ENCODE measurements at regions of chr13 and their contacts with region 1.

Region 1: GRCh38 chr13:112873851-112874750 is 94.9 kb upstream of the MCF2L start:
- DNase-seq: peak; percentile 59 to 93 (median 78)
- ATAC-seq: peak; percentile 85 to 98 (median 96)
- H3K4me3 ChIP-seq: no peak overlapping the region
- H3K27ac ChIP-seq: no peak overlapping the region
- H3K4me1 ChIP-seq: no peaks in the 10 kb centered on the region
- H3K27me3 ChIP-seq: no peaks in the 10 kb centered on the region
- CTCF ChIP-seq: peak; percentile 87 to 93 (median 88)

Region 2: GRCh38 chr13:112626124-112626523 is 248.0 kb before region 1 on chr13:
- intact Hi-C with region 1: loop called in 2 of 3 experiments (anchors 5 to 10 kb)
- DNase-seq: no peak
- ATAC-seq: no peak
- H3K4me3 ChIP-seq: no peak overlapping the region
- H3K27ac ChIP-seq: no peak overlapping the region
- H3K4me1 ChIP-seq: no peaks in the 10 kb centered on the region
- H3K27me3 ChIP-seq: no peaks in the 10 kb centered on the region
- CTCF ChIP-seq: no peak

Region 3: GRCh38 chr13:112638157-112638750 is 235.8 kb before region 1 on chr13:
- intact Hi-C with region 1: loop called in 1 of 3 experiments (anchors 10 kb)
- DNase-seq: peak in 1 of 6 donors; percentile 43
- ATAC-seq: no peak
- H3K4me3 ChIP-seq: no peak overlapping the region
- H3K27ac ChIP-seq: no peak overlapping the region
- H3K4me1 ChIP-seq: peaks cover 0 to 11% (median 0%) of the 10 kb centered on the region in 3 donors
- H3K27me3 ChIP-seq: no peaks in the 10 kb centered on the region
- CTCF ChIP-seq: no peak